Activated CD4-positive, alpha-beta T cell treated with anti-CD3 and anti-CD28 coated beads, Interleukin-2, amount 10 ng/mL, durations not matched to agents 24 days and 14 days (primary cell): ENCODE measurements at regions of chr12 and their contacts with region 1.

Region 1: GRCh38 chr12:56020423-56021184 is at the start of gene IKZF4:
- DNase-seq: peak; percentile 77
- H3K4me3 Mint-ChIP-seq: peak within 1 kb of the TSS; percentile 100
- H3K27ac Mint-ChIP-seq: peak within 1 kb of the TSS; percentile 99
- H3K4me1 Mint-ChIP-seq: peaks cover 47% of the 10 kb centered on the region
- H3K27me3 Mint-ChIP-seq: no peaks in the 10 kb centered on the region
- total RNA-seq, gene IKZF4: 24.3 and 26.1 TPM in 2 replicates

Region 2: DNA sequence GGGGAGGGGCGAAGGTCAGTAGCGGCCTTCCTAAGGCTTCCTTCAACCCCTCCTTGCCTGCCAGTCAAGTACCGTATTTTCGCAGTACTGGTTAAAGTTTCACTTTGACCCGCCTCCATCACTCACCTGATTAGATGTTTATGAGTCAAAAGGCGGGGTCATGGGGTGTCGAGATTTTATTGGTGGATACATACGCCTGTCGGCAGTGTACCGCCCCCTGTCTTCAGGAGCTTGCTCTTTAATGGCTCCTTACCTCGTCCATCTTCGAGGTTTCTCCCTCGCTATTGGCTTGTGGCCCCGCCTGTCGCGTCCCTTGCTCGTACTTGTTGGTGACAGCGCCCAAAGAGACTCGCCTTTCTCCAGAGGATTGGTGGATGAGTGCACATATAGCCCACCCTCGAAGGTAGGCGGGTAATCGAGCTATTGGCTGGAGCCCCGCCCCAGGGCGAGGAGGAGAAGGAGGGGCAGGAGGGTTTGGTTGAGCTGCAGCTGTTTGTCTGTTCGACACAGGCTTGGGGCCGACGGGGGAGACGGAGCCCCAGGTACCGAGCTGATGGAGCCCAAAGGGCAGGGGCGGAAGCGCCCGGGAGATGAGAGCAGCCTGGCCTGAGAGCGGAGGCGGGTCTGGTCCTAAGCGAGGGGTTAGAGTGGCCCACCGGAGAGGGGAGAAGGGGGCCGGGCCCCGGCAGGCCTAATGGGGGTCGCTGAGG is 46.9 kb before region 1 on chr12 and contains the start of gene RAB5B:
- intact Hi-C with region 1: loop called (anchors 1 kb)
- DNase-seq: peak; percentile 99
- H3K4me3 Mint-ChIP-seq: no peak within 1 kb of the TSS
- H3K27ac Mint-ChIP-seq: no peak within 1 kb of the TSS
- H3K4me1 Mint-ChIP-seq: peaks cover 28% of the 10 kb centered on the region
- H3K27me3 Mint-ChIP-seq: no peaks in the 10 kb centered on the region
- total RNA-seq, gene RAB5B: 39.0 and 40.2 TPM in 2 replicates

Region 3: GRCh38 chr12:56007564-56008559 is 12.7 kb before region 1 on chr12:
- intact Hi-C with region 1: loop called (anchors 2 kb)
- DNase-seq: peak; percentile 89
- H3K4me3 Mint-ChIP-seq: peak overlapping the region; percentile 87
- H3K27ac Mint-ChIP-seq: peak overlapping the region; percentile 82
- H3K4me1 Mint-ChIP-seq: peaks cover 32% of the 10 kb centered on the region
- H3K27me3 Mint-ChIP-seq: no peaks in the 10 kb centered on the region

Region 4: DNA sequence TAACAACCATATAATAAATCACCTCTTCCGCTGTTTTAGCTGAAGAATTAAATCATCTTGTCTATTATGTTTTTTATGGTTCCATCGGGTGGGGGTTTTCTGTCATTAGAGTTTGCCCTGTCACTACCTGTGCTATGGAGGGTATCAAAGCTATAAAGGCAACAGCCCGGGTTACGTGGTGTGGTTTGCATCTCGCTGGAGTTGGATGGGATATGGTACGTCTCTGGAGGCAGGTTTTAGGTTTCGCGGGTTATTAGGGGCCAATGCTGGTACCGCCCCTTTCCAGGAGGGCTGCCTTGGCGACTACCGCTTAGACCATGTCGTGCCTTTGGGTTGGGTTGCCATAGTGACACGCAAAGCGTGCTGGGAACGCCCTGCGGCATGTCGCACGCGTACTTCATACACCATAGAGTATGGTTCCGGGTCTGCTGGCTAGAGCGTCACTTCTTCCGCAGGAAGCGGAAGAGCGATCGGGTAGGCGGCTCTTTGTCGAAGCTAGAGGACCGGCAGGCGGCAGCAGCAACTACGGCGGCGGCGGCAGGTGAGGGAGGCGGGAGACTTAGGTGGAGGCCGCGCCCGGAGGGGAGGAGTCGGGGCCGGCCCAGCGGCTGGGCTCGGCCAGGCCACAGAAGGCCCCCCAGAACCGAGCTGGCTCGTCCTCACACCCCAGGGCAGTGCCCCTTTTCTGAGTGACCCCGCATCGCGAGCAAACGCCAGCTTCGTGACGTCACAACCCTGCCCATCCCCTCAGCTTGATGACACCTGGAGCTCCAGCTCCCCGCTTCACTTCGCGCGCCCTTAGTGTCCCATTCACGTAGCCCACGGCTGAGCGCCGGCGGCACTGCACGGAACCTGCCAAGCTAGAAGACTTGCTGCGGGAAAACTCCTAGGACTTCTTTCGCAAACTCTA is 97.4 kb after region 1 on chr12 and contains the start of gene ZC3H10:
- intact Hi-C with region 1: no loop called
- DNase-seq: peak; percentile 99
- H3K4me3 Mint-ChIP-seq: peak within 1 kb of the TSS; percentile 97
- H3K27ac Mint-ChIP-seq: peak within 1 kb of the TSS; percentile 100
- H3K4me1 Mint-ChIP-seq: peaks cover 35% of the 10 kb centered on the region
- H3K27me3 Mint-ChIP-seq: peaks cover 3% of the 10 kb centered on the region
- total RNA-seq, gene ZC3H10: 8.9 and 11.2 TPM in 2 replicates

Region 5: GRCh38 chr12:56146492-56147460 is 126.2 kb after region 1 on chr12:
- intact Hi-C with region 1: no loop called
- DNase-seq: no peak
- H3K4me3 Mint-ChIP-seq: no peak overlapping the region
- H3K27ac Mint-ChIP-seq: peak overlapping the region; percentile 15
- H3K4me1 Mint-ChIP-seq: peaks cover 27% of the 10 kb centered on the region
- H3K27me3 Mint-ChIP-seq: no peaks in the 10 kb centered on the region